ENCODE measurements at regions of chr12 and their contacts with region 1.

Region 1: GRCh38 chr12:18257251-18257650 is 4.1 kb upstream of the PIK3C2G start:
- DNase-seq: no peak
- H3K4me3 ChIP-seq: no peak overlapping the region
- H3K27ac ChIP-seq: no peak overlapping the region
- H3K4me1 ChIP-seq: no peaks in the 10 kb centered on the region
- H3K27me3 ChIP-seq: no peaks in the 10 kb centered on the region
- CTCF ChIP-seq: no peak

Region 2: DNA sequence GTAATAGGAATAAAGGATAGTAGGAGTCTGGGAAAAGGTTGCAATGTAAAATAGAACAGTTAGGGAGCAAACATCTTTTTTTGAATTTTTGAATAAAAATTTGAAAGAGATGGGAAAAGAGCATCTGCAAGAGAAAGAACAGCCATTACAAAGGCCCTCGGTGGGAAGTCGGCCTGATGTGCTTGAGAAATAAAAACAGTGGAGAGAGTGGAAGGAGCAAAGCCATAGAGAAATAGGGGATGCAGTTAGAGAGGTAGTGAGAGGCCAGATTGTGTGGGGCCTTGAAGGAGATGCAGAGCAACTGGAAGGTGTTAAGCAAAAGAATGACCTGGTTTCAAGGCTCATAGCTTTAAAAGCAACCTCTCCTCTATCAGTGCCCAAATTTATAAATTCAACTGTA is 577.0 kb before region 1 on chr12:
- intact Hi-C with region 1: no loop called
- DNase-seq: no peak
- H3K4me3 ChIP-seq: no peak overlapping the region
- H3K27ac ChIP-seq: no peak overlapping the region
- H3K4me1 ChIP-seq: no peaks in the 10 kb centered on the region
- H3K27me3 ChIP-seq: no peaks in the 10 kb centered on the region
- CTCF ChIP-seq: no peak

Region 3: GRCh38 chr12:18066666-18067065 is 190.6 kb before region 1 on chr12:
- intact Hi-C with region 1: no loop called
- DNase-seq: no peak
- H3K4me3 ChIP-seq: no peak overlapping the region
- H3K27ac ChIP-seq: no peak overlapping the region
- H3K4me1 ChIP-seq: no peaks in the 10 kb centered on the region
- H3K27me3 ChIP-seq: no peaks in the 10 kb centered on the region
- CTCF ChIP-seq: no peak

Region 4: DNA sequence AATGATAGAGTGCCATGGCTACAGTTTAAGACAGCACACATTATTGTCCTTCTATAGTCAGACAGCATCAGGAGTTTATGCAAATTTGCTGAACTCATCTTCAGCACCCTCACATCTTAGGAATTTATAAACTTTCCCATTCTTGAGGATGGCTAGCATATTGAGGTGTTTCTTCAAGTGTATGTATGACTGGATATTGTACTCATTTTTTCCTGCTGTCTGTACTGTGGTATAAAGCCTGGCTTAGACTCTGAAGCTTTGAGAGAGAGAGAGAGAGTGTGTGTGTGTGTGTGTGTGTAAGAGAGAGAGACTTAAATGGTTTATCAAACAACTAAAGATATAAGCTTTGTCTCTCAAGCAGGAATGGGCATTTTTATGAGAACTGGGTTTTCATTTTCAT is 165.6 kb after region 1 on chr12:
- intact Hi-C with region 1: loop called (anchors 5 kb)
- DNase-seq: no peak
- H3K4me3 ChIP-seq: no peak overlapping the region
- H3K27ac ChIP-seq: no peak overlapping the region
- H3K4me1 ChIP-seq: no peaks in the 10 kb centered on the region
- H3K27me3 ChIP-seq: no peaks in the 10 kb centered on the region
- CTCF ChIP-seq: no peak

Region 5: DNA sequence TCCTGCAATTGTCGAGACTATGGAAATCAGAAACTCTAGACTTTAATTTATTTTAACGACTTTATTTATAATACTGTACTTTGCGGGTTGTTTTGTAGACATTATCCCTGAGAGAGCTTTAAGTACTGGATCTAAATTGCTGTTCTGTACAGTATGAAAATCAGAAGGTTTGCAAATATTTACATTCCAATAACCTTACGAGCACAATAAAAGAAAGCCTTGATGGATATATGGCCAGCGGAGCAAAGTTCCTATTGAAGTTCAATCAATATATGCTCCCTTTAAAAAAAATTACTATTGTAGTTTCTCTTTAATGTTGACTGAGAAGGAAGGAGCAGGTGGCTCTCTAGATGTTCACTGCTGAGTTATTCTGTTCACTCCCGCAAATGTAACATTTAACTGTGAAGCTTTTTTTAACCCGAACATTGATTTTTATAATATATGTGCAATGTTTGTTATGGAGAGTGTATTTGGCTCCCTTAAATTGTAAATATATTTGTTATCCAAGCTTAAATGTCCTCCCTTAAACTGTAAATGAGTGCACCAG is 245.2 kb after region 1 on chr12:
- intact Hi-C with region 1: no loop called
- DNase-seq: no peak
- H3K4me3 ChIP-seq: no peak overlapping the region
- H3K27ac ChIP-seq: no peak overlapping the region
- H3K4me1 ChIP-seq: no peaks in the 10 kb centered on the region
- H3K27me3 ChIP-seq: no peaks in the 10 kb centered on the region
- CTCF ChIP-seq: no peak